ENCODE measurements at regions of chr1 and their contacts with region 1.

Region 1: GRCh38 chr1:65668368-65668767 is 124.3 kb upstream of the PDE4B start:
- DNase-seq: no peak
- H3K4me3 ChIP-seq: no peak overlapping the region
- CTCF ChIP-seq: no peak

Region 2: DNA sequence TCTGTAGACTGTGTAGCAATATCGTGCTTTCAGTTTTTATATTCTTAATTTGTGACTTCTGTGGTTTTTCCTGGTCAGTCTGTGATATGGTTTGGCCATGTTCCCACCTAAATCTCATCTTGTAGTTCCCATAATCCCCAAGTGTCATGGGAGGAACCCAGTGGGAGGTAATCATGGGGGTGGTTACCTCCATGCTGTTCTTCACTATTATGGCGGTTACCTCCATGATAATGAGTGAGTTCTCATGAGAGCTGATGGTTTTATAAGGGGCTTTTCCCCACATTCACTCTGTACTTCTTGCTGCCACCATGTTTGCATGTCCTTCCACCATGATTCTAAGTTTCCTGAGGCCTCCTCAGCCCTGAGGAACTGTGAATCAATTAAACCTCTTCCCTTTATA is 78.1 kb before region 1 on chr1:
- in situ Hi-C with region 1: loop called (anchors 5 kb)
- DNase-seq: no peak
- H3K4me3 ChIP-seq: no peak overlapping the region
- CTCF ChIP-seq: no peak

Region 3: GRCh38 chr1:65717815-65718454 is 49.6 kb after region 1 on chr1:
- in situ Hi-C with region 1: no loop called
- DNase-seq: peak; percentile 11
- H3K4me3 ChIP-seq: no peak overlapping the region
- CTCF ChIP-seq: peak; percentile 16

Measured in astrocyte of the cerebellum (primary cell).